ENCODE measurements at regions of chr7 and their contacts with region 1.

Region 1: DNA sequence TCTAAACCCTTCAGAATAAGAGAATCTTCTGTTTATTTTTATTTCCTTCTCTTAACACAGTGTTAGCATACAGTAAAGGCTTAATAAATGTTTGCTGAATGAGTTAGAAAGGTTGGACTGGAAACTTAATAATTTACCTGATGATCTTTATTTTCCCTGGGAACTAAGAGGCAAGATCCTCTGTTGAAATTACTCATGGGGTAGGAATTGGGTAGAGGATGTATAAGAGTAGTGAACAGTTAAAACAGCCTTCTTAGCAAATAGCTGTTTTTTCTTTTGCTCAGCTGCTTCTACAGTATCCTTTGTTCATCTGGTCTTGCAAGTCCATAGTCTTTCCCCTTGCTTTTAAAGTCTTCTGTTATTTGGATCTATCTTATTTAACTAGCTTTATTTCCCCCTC is 80.0 kb downstream of the AKAP9 start:
- DNase-seq: no peak
- ATAC-seq: no peak
- H3K4me3 Mint-ChIP-seq: no peak overlapping the region
- H3K27ac Mint-ChIP-seq: no peak overlapping the region
- H3K4me1 Mint-ChIP-seq: no peaks in the 10 kb centered on the region
- H3K27me3 Mint-ChIP-seq: no peaks in the 10 kb centered on the region
- CTCF ChIP-seq: no peak

Region 2: GRCh38 chr7:90945104-90945787 is 1075.4 kb before region 1 on chr7:
- CTCF ChIA-PET with region 1: no interaction called
- POLR2A ChIA-PET with region 1: no interaction called
- intact Hi-C with region 1: no loop called
- DNase-seq: no peak
- ATAC-seq: no peak
- H3K4me3 Mint-ChIP-seq: no peak overlapping the region
- H3K27ac Mint-ChIP-seq: peak overlapping the region; percentile 12
- H3K4me1 Mint-ChIP-seq: peaks cover 18% of the 10 kb centered on the region
- H3K27me3 Mint-ChIP-seq: no peaks in the 10 kb centered on the region
- CTCF ChIP-seq: no peak

Region 3: GRCh38 chr7:91657483-91658071 is 363.1 kb before region 1 on chr7:
- CTCF ChIA-PET with region 1: no interaction called
- POLR2A ChIA-PET with region 1: no interaction called
- intact Hi-C with region 1: no loop called
- DNase-seq: no peak
- ATAC-seq: no peak
- H3K4me3 Mint-ChIP-seq: no peak overlapping the region
- H3K27ac Mint-ChIP-seq: no peak overlapping the region
- H3K4me1 Mint-ChIP-seq: no peaks in the 10 kb centered on the region
- H3K27me3 Mint-ChIP-seq: no peaks in the 10 kb centered on the region
- CTCF ChIP-seq: no peak

Region 4: DNA sequence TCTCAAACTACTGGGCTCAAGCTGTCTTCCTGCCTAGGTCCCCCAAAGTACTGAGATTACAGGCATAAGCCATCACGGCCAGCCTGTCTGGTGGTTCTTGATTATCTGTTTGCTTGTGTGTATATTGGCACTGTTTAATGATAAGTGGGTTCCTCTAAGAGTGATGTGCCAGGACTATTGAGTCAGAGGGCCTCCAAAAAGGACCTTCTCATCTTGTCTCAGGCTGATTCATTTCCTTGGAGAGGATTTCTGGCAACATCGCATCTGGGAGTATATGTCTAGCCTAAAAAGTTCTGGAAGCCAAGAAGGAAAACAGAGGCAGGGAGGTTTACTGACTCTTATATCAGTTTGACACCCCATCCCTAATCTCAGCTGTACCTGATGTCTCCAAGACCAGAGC is 107.0 kb before region 1 on chr7:
- CTCF ChIA-PET with region 1: no interaction called
- POLR2A ChIA-PET with region 1: no interaction called
- intact Hi-C with region 1: no loop called
- DNase-seq: no peak
- ATAC-seq: no peak
- H3K4me3 Mint-ChIP-seq: no peak overlapping the region
- H3K27ac Mint-ChIP-seq: no peak overlapping the region
- H3K4me1 Mint-ChIP-seq: no peaks in the 10 kb centered on the region
- H3K27me3 Mint-ChIP-seq: peaks cover 11% of the 10 kb centered on the region
- CTCF ChIP-seq: no peak

Region 5: DNA sequence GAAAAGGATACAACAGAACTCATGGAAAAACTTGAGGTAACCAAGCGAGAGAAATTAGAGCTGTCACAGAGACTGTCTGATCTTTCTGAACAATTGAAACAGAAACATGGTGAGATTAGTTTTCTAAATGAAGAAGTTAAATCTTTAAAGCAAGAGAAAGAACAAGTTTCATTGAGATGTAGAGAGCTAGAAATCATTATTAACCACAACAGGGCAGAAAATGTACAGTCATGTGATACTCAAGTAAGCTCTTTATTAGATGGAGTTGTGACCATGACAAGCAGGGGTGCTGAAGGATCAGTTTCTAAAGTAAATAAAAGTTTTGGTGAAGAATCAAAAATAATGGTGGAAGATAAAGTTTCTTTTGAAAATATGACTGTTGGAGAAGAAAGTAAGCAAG is 17.9 kb before region 1 on chr7:
- CTCF ChIA-PET with region 1: no interaction called
- POLR2A ChIA-PET with region 1: no interaction called
- intact Hi-C with region 1: loop called (anchors 1 kb)
- DNase-seq: no peak
- ATAC-seq: no peak
- H3K4me3 Mint-ChIP-seq: no peak overlapping the region
- H3K27ac Mint-ChIP-seq: no peak overlapping the region
- H3K4me1 Mint-ChIP-seq: no peaks in the 10 kb centered on the region
- H3K27me3 Mint-ChIP-seq: no peaks in the 10 kb centered on the region
- CTCF ChIP-seq: no peak